ENCODE measurements at regions of chr7 and their contacts with region 1.

Region 1: DNA sequence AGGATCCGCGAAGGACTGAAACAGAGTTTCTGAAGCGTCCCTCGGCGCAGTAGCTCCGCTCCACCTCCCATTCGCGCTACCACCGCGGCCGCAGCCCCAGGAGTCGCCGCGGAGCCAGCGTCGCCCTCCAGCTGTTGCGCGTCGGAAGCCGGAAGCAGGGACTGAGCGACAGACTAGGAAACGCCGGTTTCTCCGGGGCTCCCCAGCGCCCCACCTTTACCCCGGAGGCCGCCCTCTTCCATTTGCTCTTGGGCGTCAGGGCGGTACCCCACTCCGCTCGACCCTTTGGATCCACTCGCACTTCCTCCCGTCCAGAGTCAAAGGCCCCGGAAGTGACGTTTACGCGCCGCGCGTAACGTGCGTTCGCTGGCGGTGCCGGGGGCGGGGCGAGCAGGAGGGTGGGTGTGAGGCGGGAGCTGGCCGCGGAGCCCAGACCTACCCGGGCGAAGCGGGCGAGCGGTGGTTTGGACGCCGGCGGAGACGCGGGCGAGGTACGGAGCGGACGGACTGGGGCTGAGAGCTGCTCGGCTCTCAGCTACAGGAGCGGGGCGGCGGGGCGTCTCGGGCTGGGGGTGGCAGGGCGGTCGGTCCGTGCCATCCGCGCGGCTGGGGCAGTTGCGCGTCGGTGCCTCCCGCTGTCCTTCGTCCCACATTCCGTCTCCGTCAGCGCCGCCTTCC is at the start of gene RABGEF1:
- DNase-seq: peak; percentile 97
- H3K4me3 ChIP-seq: peak within 1 kb of the TSS; percentile 89 to 98 (median 93)
- H3K27ac ChIP-seq: peak within 1 kb of the TSS; percentile 92
- H3K4me1 ChIP-seq: peaks cover 9% of the 10 kb centered on the region
- H3K27me3 ChIP-seq: no peaks in the 10 kb centered on the region
- CTCF ChIP-seq: no peak
- total RNA-seq, gene RABGEF1: 49.8 to 58.7 TPM

Region 2: DNA sequence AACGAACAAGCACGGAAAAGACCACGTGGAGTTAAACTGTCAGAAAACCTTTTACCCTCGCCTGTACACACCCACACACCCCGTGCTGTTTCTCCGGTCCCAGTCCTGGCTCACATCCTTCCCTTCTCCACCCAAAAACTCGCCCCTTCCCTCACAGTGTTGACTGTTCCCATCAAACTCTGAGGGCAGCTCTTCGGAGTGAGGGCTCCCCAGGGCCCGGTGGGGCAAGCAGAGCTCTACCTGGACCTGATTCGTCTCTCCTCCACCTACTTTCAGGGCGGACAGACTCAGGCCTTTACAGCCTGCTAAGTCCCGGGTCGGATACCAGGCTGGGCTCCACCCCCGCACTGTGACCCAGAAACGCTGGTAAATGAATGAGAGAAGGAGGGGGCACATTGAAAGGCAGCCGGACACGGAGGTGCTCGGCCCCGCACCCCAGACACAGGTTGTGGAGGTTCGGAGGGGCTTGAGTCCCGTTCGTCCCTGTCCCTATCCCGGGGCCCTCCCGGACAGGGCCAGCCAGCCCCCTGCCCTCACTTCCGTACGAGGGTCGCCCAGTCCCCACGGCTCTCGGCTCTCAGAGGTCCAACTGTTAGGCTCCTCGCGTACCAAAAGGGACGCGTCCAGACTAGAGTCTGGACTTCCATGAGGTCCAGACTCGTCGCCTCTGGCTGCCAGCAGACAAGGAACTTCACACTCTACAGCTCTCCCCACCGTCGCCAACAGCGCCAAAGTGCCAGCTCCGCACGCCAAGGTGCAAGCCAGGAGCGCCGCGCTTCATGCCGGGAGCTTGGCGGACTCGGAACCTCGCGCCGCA is 696.6 kb before region 1 on chr7:
- CTCF ChIA-PET with region 1: no interaction called
- dilution Hi-C with region 1: no loop called
- in situ Hi-C with region 1: no loop called
- intact Hi-C with region 1: no loop called
- DNase-seq: no peak
- H3K4me3 ChIP-seq: peak overlapping the region; percentile 18 to 36 (median 29)
- H3K27ac ChIP-seq: no peak overlapping the region
- H3K4me1 ChIP-seq: peaks cover 13% of the 10 kb centered on the region
- H3K27me3 ChIP-seq: no peaks in the 10 kb centered on the region
- CTCF ChIP-seq: no peak

Region 3: GRCh38 chr7:66681491-66682349 is 58.7 kb before region 1 on chr7:
- CTCF ChIA-PET with region 1: no interaction called
- dilution Hi-C with region 1: no loop called
- in situ Hi-C with region 1: no loop called
- intact Hi-C with region 1: loop called (anchors 2 kb)
- DNase-seq: peak; percentile 95
- H3K4me3 ChIP-seq: peak overlapping the region; percentile 97 to 99 (median 98)
- H3K27ac ChIP-seq: peak overlapping the region; percentile 85
- H3K4me1 ChIP-seq: peaks cover 11% of the 10 kb centered on the region
- H3K27me3 ChIP-seq: no peaks in the 10 kb centered on the region
- CTCF ChIP-seq: no peak

Region 4: GRCh38 chr7:66707825-66708224 is 32.6 kb before region 1 on chr7:
- CTCF ChIA-PET with region 1: no interaction called
- dilution Hi-C with region 1: no loop called
- in situ Hi-C with region 1: no loop called
- intact Hi-C with region 1: no loop called
- DNase-seq: no peak
- H3K4me3 ChIP-seq: no peak overlapping the region
- H3K27ac ChIP-seq: no peak overlapping the region
- H3K4me1 ChIP-seq: no peaks in the 10 kb centered on the region
- H3K27me3 ChIP-seq: no peaks in the 10 kb centered on the region
- CTCF ChIP-seq: no peak

Measured in mammary epithelial cell (primary cell).